Activated CD4-positive, alpha-beta T cell treated with anti-CD3 and anti-CD28 coated beads, Interleukin-2, amount 10 ng/mL, durations not matched to agents 24 days and 14 days (primary cell): ENCODE measurements at regions of chr1 and their contacts with region 1.

Region 1: DNA sequence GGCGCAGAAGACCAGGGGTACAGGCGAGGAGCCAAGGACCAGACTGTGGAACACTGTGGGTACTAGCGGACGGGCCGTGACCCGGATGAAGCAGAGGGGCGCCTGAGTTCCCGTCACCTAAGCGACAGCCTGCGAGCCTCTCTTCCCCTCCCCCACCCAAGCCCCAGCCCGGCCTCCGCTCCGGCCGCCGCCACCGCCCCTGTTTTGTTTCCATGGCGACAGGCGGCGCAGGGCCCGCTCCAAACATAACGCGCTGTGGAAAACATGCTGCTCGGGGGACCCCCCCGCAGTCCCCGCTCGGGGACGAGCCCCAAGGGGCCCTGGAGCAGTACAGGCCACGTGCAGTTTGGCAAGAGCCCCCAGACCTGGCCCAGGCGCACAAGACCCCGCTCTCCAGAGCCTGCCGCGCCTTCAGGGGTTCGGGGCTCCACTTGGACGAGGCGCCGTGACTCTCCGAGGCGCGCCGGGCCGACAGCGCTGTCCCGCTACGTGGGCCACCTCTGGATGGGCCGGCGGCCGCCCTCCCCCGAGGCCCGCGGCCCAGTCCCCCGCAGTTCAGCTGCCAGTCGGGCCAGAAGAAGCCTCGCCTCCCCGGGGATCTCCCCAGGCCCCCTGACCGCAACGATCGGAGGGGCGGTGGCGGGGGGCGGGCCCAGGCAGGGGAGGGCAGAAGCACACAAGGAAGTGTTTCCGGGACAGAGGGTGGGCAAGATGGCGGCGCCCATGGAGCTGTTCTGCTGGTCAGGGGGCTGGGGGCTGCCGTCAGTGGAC is at the start of gene MTX1:
- DNase-seq: peak; percentile 97
- H3K4me3 Mint-ChIP-seq: peak within 1 kb of the TSS; percentile 95
- H3K27ac Mint-ChIP-seq: peak within 1 kb of the TSS; percentile 93
- H3K4me1 Mint-ChIP-seq: peaks cover 26% of the 10 kb centered on the region
- H3K27me3 Mint-ChIP-seq: no peaks in the 10 kb centered on the region
- total RNA-seq, gene MTX1: 62.4 and 64.7 TPM in 2 replicates

Region 2: GRCh38 chr1:155193275-155193990 is 15.3 kb before region 1 on chr1:
- intact Hi-C with region 1: loop called (anchors 1 kb)
- DNase-seq: peak; percentile 94
- H3K4me3 Mint-ChIP-seq: peak overlapping the region; percentile 97
- H3K27ac Mint-ChIP-seq: peak overlapping the region; percentile 100
- H3K4me1 Mint-ChIP-seq: peaks cover 34% of the 10 kb centered on the region
- H3K27me3 Mint-ChIP-seq: no peaks in the 10 kb centered on the region

Region 3: DNA sequence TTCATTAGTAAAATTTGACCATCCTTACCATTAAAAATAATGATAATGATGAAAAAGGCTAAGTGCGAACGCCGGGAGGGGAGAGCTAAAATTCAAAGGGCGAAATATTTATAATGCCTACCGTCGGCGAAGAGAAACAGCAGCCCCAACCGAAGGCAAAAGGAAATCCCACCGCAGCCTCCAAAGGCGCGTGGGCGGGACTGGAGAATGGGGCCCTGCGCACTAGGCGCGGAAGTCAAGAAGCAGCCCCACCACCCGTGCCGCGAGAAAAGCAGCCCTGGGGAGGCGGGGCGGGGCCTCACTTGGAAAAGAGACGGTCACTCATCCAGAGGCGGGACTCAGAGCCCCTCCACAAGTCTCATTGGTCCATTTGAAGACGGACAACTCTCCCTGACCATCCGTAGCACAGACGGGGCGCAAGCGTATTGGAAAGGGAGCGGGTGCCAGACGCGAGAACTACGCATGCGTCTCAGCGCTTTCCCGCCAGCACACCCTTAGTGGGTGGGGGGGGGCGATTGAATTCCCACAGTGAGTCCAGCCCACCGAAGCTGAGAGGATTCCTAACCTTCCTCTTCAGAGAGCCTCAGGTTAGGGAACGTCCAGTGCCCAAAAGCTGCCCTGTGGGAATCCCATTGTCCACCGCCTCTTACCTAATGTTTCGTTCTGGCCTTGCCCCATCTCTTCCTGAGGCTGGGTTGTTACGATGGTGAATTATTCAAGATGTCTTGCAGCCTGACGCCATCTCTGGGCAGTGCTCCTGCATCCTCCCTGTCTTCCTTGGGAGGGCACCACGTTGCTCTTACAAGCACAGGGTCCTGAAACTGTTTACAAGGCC is 18.8 kb after region 1 on chr1:
- intact Hi-C with region 1: loop called (anchors 1 kb)
- DNase-seq: peak; percentile 99
- H3K4me3 Mint-ChIP-seq: peak overlapping the region; percentile 88
- H3K27ac Mint-ChIP-seq: peak overlapping the region; percentile 88
- H3K4me1 Mint-ChIP-seq: peaks cover 26% of the 10 kb centered on the region
- H3K27me3 Mint-ChIP-seq: no peaks in the 10 kb centered on the region

Region 4: GRCh38 chr1:155244368-155245162 is 35.8 kb after region 1 on chr1:
- intact Hi-C with region 1: loop called (anchors 2 kb)
- DNase-seq: peak; percentile 99
- H3K4me3 Mint-ChIP-seq: peak overlapping the region; percentile 81
- H3K27ac Mint-ChIP-seq: peak overlapping the region; percentile 96
- H3K4me1 Mint-ChIP-seq: peaks cover 49% of the 10 kb centered on the region
- H3K27me3 Mint-ChIP-seq: peaks cover 3% of the 10 kb centered on the region

Region 5: GRCh38 chr1:155261852-155262673 is 53.3 kb after region 1 on chr1 and contains the start of gene SCAMP3:
- intact Hi-C with region 1: loop called (anchors 5 kb)
- DNase-seq: peak; percentile 96
- H3K4me3 Mint-ChIP-seq: peak within 1 kb of the TSS; percentile 96
- H3K27ac Mint-ChIP-seq: peak within 1 kb of the TSS; percentile 91
- H3K4me1 Mint-ChIP-seq: peaks cover 30% of the 10 kb centered on the region
- H3K27me3 Mint-ChIP-seq: no peaks in the 10 kb centered on the region
- total RNA-seq, gene SCAMP3: 152 and 158 TPM in 2 replicates

Region 6: DNA sequence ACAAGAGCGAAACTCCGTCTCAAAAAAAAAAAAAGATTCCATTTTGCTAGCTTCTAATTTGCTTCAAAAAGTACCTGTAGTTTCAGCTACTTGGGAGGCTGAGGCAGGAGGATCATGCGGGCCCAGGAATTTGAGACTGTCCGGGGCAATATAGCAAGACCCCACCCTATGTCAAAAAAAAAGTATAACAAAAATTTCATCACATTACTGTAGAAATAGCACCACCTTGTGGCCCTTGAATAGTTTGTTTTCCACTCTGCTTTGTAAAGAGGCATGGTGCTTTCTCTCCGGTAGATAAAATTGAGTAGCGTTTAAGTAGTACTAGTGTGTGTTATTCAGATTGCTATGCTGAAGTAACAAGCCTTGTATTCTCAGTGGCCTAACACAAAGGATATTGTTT is 383.0 kb after region 1 on chr1:
- intact Hi-C with region 1: loop called (anchors 2 kb)
- DNase-seq: peak; percentile 83
- H3K4me3 Mint-ChIP-seq: no peak overlapping the region
- H3K27ac Mint-ChIP-seq: no peak overlapping the region
- H3K4me1 Mint-ChIP-seq: no peaks in the 10 kb centered on the region
- H3K27me3 Mint-ChIP-seq: no peaks in the 10 kb centered on the region

Region 7: DNA sequence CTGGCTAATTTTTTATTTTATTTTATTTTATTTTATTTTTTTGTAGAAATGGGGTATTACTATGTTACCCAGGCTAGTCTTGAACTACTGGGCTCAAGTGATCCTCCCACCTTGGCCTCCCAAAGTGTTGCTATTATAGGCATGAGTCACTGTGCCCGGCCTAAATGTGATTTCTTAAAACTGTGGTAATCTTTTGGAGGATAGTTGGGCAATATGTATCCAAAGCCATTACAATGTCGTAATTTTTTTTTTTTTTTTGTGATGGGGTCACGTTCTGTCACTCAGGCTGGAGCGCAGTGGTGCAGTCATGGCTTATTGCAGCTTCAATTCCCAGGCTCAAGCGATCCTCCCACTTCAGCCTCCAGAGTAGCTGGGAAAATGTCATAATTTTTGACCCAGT is 1876.7 kb after region 1 on chr1:
- intact Hi-C with region 1: no loop called
- DNase-seq: no peak
- H3K4me3 Mint-ChIP-seq: no peak overlapping the region
- H3K27ac Mint-ChIP-seq: no peak overlapping the region
- H3K4me1 Mint-ChIP-seq: peaks cover 2% of the 10 kb centered on the region
- H3K27me3 Mint-ChIP-seq: peaks cover 17% of the 10 kb centered on the region